Body of pancreas (tissue), 4 donors: ENCODE measurements at regions of chr14 and their contacts with region 1.

Region 1: GRCh38 chr14:64628940-64629408 is 75.2 kb upstream of the PLEKHG3 start:
- DNase-seq: no peak
- ATAC-seq: no peak
- H3K4me3 ChIP-seq: no peak overlapping the region
- H3K27ac ChIP-seq: no peak overlapping the region
- H3K4me1 ChIP-seq: peaks cover 9% of the 10 kb centered on the region
- H3K27me3 ChIP-seq: no peaks in the 10 kb centered on the region
- CTCF ChIP-seq: no peak
- POLR2A ChIP-seq: no peak

Region 2: DNA sequence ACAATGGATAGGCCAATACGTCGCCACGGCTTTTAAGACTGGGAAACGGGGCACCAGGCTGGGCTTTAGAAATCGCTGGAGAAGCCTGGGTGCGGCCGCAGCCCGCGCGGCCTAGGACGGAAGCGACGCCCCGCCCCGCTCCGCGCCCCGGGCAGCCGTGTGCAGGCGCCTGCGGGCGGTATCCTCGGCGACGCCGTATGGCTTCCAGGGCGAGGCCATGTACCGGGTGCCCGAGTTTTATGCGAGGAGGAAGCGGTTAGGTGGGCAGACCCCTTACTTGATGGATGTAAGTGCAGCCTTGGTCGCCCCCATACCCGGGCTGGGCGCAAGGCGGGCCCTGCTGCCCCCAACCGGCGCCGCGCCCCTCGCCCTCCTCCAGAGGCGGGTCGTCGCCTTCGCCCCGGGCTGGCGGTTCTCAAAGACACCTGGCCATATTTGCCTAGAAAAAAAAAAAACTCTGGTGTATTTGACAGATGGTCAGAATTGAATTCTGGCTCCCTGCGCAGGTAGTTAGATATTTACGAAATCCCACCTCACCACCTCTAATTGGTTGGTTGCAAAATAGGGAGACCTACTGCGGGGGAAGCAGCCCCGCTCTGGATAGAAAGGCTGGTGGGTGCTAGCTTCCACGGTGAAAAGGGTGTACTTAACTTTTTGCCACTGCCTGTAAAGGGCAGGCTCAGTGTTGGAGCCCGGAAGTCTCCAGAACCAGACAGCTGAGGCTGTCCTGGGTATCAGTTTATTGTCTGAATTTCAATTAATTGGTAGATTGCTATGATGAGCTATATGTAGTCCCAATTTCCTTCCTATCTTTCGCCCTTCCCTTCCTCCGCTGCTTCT is 79.0 kb before region 1 on chr14 and contains the start of gene PPP1R36:
- intact Hi-C with region 1: loop called (anchors 10 kb)
- DNase-seq: peak; percentile 62 to 79 (median 66)
- ATAC-seq: peak; percentile 94
- H3K4me3 ChIP-seq: peak within 1 kb of the TSS in 1 of 2 donors; percentile 14
- H3K27ac ChIP-seq: peak within 1 kb of the TSS; percentile 12 to 85 (median 76)
- H3K4me1 ChIP-seq: peaks cover 11% of the 10 kb centered on the region
- H3K27me3 ChIP-seq: no peaks in the 10 kb centered on the region
- CTCF ChIP-seq: peak in 1 of 7 experiments; percentile 12
- POLR2A ChIP-seq: peak; percentile 43 to 62 (median 45)
- total RNA-seq, gene PPP1R36: 4.4 to 5.6 TPM

Region 3: GRCh38 chr14:65074449-65075150 is 445.6 kb after region 1 on chr14:
- intact Hi-C with region 1: no loop called
- DNase-seq: peak in 1 of 4 donors; percentile 20
- ATAC-seq: no peak
- H3K4me3 ChIP-seq: no peak overlapping the region
- H3K27ac ChIP-seq: peak overlapping the region in 1 of 4 donors; percentile 26
- H3K4me1 ChIP-seq: peaks cover 28% of the 10 kb centered on the region
- H3K27me3 ChIP-seq: no peaks in the 10 kb centered on the region
- CTCF ChIP-seq: no peak
- POLR2A ChIP-seq: no peak